ENCODE measurements at regions of chr9 and their contacts with region 1.

Region 1: GRCh38 chr9:131502781-131503625 is at the start of gene POMT1:
- DNase-seq: peak; percentile 90 to 91 (median 91)
- H3K4me3 ChIP-seq: peak within 1 kb of the TSS; percentile 74 to 86
- H3K4me3 Mint-ChIP-seq: peak within 1 kb of the TSS; percentile 92 to 98 (median 94)
- H3K27ac ChIP-seq: peak within 1 kb of the TSS; percentile 74
- H3K27ac Mint-ChIP-seq: peak within 1 kb of the TSS; percentile 79 to 97 (median 92)
- H3K4me1 ChIP-seq: peaks cover 67% of the 10 kb centered on the region
- H3K4me1 Mint-ChIP-seq: peaks cover 44 to 79% (median 56%) of the 10 kb centered on the region in 4 donors
- H3K27me3 ChIP-seq: no peaks in the 10 kb centered on the region
- H3K27me3 Mint-ChIP-seq: no peaks in the 10 kb centered on the region
- total RNA-seq, gene POMT1: 52.1 to 58.5 TPM

Region 2: DNA sequence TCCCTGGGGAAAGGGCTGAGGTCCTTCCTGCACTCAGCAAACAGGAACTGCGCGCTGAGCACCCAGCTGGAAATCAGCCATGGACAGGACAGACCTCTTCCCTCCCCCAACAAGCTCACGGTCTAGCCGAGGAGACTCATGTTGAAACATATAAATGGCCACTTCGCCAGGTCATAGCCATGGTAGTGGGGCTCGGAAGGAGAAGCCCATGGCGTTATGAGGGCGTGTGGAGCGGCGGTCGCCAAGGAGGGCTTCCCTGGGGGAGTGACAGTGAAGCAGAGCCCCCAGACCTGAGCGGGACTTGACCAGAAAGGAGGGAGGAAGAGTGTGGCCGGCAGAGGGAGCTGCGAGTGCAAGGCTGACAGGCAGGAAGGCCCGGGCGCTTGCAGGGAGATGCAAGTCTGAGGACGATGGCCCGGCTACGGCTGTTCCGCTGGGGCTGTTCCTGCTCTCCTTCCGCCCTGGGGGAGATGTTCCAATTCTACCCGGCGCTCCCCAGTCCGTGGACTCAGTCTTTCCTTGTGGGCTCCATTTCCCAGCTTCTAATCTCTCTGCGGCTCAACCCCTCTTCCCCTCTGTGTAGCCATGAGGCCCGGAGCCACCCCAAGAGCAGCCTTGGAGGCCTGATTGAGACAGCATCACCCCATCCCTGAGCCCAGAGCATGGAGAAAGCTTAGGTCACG is 153.0 kb before region 1 on chr9:
- CTCF ChIA-PET with region 1: interaction called, 13 read pairs
- POLR2A ChIA-PET with region 1: interaction called, 4 read pairs
- intact Hi-C with region 1: no loop called
- DNase-seq: peak; percentile 79 to 82 (median 81)
- H3K4me3 ChIP-seq: no peak overlapping the region
- H3K4me3 Mint-ChIP-seq: peak overlapping the region in 4 of 8 donors; percentile 36 to 63 (median 50)
- H3K27ac ChIP-seq: no peak overlapping the region
- H3K27ac Mint-ChIP-seq: peak overlapping the region in 3 of 7 donors; percentile 30 to 91 (median 42)
- H3K4me1 ChIP-seq: peaks cover 9% of the 10 kb centered on the region
- H3K4me1 Mint-ChIP-seq: peaks cover 0 to 12% (median 6%) of the 10 kb centered on the region in 4 donors
- H3K27me3 ChIP-seq: no peaks in the 10 kb centered on the region
- H3K27me3 Mint-ChIP-seq: peaks cover 0 to 4% of the 10 kb centered on the region in 2 donors

Region 3: GRCh38 chr9:131393622-131394463 is 109.2 kb before region 1 on chr9 and contains the start of gene PRRC2B:
- CTCF ChIA-PET with region 1: interaction called, 4 read pairs
- POLR2A ChIA-PET with region 1: interaction called, 7 read pairs
- intact Hi-C with region 1: loop called (anchors 2 kb)
- DNase-seq: peak; percentile 80 to 83 (median 82)
- H3K4me3 ChIP-seq: peak within 1 kb of the TSS; percentile 70 to 87
- H3K4me3 Mint-ChIP-seq: peak within 1 kb of the TSS; percentile 87 to 95 (median 90)
- H3K27ac ChIP-seq: peak within 1 kb of the TSS; percentile 76
- H3K27ac Mint-ChIP-seq: peak within 1 kb of the TSS; percentile 94 to 98 (median 96)
- H3K4me1 ChIP-seq: peaks cover 48% of the 10 kb centered on the region
- H3K4me1 Mint-ChIP-seq: peaks cover 38 to 56% (median 42%) of the 10 kb centered on the region in 4 donors
- H3K27me3 ChIP-seq: no peaks in the 10 kb centered on the region
- H3K27me3 Mint-ChIP-seq: no peaks in the 10 kb centered on the region
- total RNA-seq, gene PRRC2B: 335 to 343 TPM

Region 4: DNA sequence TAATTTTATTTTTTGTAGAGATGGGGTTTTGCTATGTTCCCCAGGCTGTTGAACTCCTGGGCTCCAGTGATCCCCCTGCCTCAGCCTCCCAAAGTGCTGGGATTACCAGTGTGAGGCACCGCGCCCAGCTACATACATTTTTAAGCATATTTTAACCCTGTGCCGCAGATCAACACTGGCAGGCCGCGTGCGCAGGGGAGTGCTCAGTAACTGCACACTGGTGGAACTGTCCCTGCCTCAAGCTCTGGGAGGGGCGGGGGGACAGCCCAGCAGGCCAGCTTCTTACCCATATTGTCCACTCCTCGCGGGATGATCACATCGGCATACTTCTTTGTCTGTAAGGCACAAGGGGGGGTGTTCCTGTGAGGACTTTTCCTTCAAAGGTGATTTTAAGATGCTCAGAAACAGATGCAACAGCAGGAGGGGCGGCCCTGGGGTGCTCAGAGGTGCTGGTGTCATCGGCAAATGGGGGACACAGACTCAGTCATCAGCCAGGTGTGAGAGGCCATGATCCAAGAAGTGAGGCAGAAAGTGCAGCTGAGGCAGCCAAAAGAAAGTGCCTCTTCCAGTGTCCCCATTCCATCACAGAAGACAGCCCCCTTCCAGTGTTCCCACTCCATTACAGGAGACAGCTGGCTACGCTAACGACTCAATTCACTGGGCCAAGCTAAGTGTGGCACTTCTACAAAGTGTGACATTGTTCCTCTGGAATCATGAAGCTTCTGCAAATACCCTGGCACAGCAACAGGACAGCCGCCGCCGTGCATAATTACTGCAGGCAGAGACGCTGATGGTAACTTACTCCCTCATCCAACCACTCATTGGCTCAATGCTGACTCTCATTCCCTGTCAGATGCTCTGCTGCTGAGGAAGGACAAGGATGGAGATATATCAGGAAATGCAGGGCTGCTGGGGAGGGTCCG is 22.9 kb after region 1 on chr9:
- CTCF ChIA-PET with region 1: no interaction called
- POLR2A ChIA-PET with region 1: interaction called, 10 read pairs
- intact Hi-C with region 1: loop called (anchors 1 kb)
- DNase-seq: no peak
- H3K4me3 ChIP-seq: no peak overlapping the region
- H3K4me3 Mint-ChIP-seq: no peak overlapping the region
- H3K27ac ChIP-seq: no peak overlapping the region
- H3K27ac Mint-ChIP-seq: peak overlapping the region in 3 of 7 donors; percentile 19 to 30 (median 29)
- H3K4me1 ChIP-seq: peaks cover 17% of the 10 kb centered on the region
- H3K4me1 Mint-ChIP-seq: peaks cover 3 to 28% (median 7%) of the 10 kb centered on the region in 4 donors
- H3K27me3 ChIP-seq: no peaks in the 10 kb centered on the region
- H3K27me3 Mint-ChIP-seq: no peaks in the 10 kb centered on the region

Region 5: GRCh38 chr9:131539223-131539923 is 36.4 kb after region 1 on chr9:
- CTCF ChIA-PET with region 1: no interaction called
- POLR2A ChIA-PET with region 1: interaction called, 13 read pairs
- intact Hi-C with region 1: no loop called
- DNase-seq: peak; percentile 50 to 65 (median 54)
- H3K4me3 ChIP-seq: no peak overlapping the region
- H3K4me3 Mint-ChIP-seq: peak overlapping the region in 7 of 8 donors; percentile 66 to 79 (median 78)
- H3K27ac ChIP-seq: no peak overlapping the region
- H3K27ac Mint-ChIP-seq: peak overlapping the region; percentile 44 to 93 (median 86)
- H3K4me1 ChIP-seq: peaks cover 53% of the 10 kb centered on the region
- H3K4me1 Mint-ChIP-seq: peaks cover 19 to 68% (median 32%) of the 10 kb centered on the region in 4 donors
- H3K27me3 ChIP-seq: no peaks in the 10 kb centered on the region
- H3K27me3 Mint-ChIP-seq: no peaks in the 10 kb centered on the region

Region 6: DNA sequence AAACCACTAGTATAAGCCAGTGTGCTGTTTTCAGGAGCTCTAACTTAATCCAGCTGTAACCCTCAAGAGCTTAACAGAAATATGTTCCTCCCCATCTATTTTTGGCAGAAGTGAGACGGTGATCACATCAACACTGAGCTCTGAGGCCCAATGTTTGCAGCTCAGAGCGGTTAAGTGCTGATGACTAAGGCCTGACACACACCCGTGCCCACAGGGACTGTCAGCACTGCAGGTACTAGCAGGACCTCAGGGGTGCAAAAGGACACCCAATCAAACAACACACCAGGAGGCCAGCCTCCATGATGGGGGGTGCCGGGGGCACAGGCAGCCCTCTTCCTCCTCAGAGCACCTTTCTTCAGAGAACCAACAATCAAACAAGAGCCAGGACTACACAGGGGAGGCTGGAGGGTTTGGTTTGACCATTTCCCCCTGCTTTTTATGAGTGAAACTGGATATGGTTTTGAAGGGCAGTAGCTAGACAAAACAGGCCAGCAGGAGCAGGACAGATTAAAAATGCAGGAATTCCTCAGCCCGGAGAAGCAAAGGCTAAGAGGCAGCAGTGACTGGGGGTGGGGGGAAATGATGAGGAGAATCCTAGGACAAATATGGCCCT is 175.6 kb after region 1 on chr9:
- CTCF ChIA-PET with region 1: no interaction called
- POLR2A ChIA-PET with region 1: interaction called, 4 read pairs
- intact Hi-C with region 1: loop called (anchors 10 kb)
- DNase-seq: peak; percentile 64 to 94 (median 73)
- H3K4me3 ChIP-seq: peak overlapping the region in 1 of 2 donors; percentile 30
- H3K4me3 Mint-ChIP-seq: peak overlapping the region; percentile 74 to 94 (median 90)
- H3K27ac ChIP-seq: peak overlapping the region; percentile 79
- H3K27ac Mint-ChIP-seq: peak overlapping the region; percentile 94 to 100 (median 98)
- H3K4me1 ChIP-seq: peaks cover 71% of the 10 kb centered on the region
- H3K4me1 Mint-ChIP-seq: peaks cover 74 to 100% (median 89%) of the 10 kb centered on the region in 4 donors
- H3K27me3 ChIP-seq: no peaks in the 10 kb centered on the region
- H3K27me3 Mint-ChIP-seq: no peaks in the 10 kb centered on the region

Region 7: DNA sequence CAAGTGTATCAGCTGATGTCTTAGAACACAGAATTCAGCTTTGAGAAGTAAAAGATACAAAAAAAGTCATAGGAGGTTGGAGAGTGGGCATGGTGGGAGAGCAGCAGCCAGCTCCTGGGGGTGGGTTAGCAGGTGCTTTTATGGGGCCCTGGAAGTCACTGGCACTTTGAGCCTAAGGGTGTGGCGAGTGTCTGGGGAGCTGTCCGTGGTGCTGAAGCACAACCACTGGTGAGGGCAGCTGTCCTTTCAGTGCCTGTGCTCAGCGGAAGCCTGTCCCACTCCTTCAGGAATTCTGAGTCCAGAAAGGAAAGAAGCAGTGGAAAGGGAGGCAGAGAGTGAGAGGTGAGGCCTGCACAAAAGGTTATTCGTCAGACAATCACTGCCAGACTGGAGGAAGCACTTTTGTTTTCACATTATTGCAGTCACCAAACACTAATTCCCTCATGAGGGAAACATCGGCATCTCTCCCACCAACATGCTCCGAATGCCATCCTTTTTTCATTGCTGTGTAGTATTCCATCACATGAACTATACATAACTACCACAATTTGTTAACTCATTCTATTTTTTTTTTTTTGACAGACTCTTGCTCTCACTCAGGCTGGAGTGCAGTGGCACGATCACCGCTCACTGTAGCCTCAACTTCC is 296.3 kb after region 1 on chr9:
- CTCF ChIA-PET with region 1: no interaction called
- POLR2A ChIA-PET with region 1: no interaction called
- intact Hi-C with region 1: no loop called
- DNase-seq: peak in 4 of 5 donors; percentile 34 to 46 (median 38)
- H3K4me3 ChIP-seq: no peak overlapping the region
- H3K4me3 Mint-ChIP-seq: no peak overlapping the region
- H3K27ac ChIP-seq: no peak overlapping the region
- H3K27ac Mint-ChIP-seq: peak overlapping the region in 1 of 7 donors; percentile 21
- H3K4me1 ChIP-seq: no peaks in the 10 kb centered on the region
- H3K4me1 Mint-ChIP-seq: no peaks in the 10 kb centered on the region
- H3K27me3 ChIP-seq: no peaks in the 10 kb centered on the region
- H3K27me3 Mint-ChIP-seq: peaks cover 13 to 32% of the 10 kb centered on the region in 2 donors